GM10248 (cell line): ENCODE measurements at regions of chr7 and their contacts with region 1.

Region 1: DNA sequence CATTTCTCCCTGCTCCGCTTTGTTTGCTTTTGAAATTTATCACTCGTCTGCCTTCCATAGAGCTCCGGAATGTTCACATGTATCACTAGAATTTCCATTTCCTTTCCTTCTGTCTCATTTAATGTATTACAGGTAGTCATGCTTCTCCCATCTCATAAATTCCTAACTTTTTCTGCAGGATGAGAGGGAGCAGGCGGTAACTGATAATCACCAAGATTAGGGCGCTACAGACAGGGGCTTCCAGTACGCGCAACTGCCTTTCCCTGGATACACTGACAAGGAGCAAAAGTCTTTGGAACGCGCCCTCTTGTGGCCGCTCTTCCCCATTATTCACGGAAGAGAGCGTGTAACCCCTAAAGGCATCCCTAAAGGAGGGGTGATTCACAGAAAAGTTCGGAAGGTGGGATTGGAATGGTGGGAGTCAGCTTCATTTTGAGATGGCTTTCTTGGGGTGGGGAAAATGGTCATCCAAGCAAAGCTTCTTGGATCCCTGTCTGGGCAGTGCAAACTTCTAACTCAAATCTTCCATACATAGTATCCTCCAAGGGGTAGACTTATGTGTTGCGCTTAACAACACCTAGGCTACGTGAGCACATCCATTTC is 6.5 kb downstream of the INHBA start:
- DNase-seq: peak; percentile 31
- CTCF ChIP-seq: peak; percentile 65

Region 2: GRCh38 chr7:41437257-41438196 is 258.9 kb before region 1 on chr7:
- CTCF ChIA-PET with region 1: no interaction called
- POLR2A ChIA-PET with region 1: no interaction called
- DNase-seq: no peak
- CTCF ChIP-seq: no peak

Region 3: DNA sequence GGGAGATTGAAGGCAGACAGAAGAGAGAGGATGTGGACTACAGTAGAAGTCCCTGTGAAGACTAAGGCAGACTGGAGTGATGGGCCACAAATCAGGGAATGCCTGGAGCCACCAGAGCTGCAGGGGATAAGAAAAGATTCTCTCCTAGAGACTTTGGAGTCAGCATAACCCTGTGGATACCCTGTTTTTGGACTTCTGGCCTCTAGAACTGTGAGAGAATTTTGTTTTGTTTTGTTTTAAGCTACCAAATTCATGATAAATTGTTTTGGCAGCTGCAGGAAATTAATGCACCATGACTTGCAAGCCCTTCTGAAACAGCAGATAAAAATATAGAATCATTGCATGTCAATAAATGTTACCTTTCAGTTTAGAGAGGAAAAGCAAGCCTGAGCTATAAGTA is 34.8 kb before region 1 on chr7:
- CTCF ChIA-PET with region 1: interaction called, 10 read pairs
- POLR2A ChIA-PET with region 1: no interaction called
- DNase-seq: no peak
- CTCF ChIP-seq: no peak

Region 4: GRCh38 chr7:41834805-41835694 is 138.6 kb after region 1 on chr7:
- CTCF ChIA-PET with region 1: no interaction called
- POLR2A ChIA-PET with region 1: no interaction called
- DNase-seq: no peak
- CTCF ChIP-seq: no peak

Region 5: DNA sequence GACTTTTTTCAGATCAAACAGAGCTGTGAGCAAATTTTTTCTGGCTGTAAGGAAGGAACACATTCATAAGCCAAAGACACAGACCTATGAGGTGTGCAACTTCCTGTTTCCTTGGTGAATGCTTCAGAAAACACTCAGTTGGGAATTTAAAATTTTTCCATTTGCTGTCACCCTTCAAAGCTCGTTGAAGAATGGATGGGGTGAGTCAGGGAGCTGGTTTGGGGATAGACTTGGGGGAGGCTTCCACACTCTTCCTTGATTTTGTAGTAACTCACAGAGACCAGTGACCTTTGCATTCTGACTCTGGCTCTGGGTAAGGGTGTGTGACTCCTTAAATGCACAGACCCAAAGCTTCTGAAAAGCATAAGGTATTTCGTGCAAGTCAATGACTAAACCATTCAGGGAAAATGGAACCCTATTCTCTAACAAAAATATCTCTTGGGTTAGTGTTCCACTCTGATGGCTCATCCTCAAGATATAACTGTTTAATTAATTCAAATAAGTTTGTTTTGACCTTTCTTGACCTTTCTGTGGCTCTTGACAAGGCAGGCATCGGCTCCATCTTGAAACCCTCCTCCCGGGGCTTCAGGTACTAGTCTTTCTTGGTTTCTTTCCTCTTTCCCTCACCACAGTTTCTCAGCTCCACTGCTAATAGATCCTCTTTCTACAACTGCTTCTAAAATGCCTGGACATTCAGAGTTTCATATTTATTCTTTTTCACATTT is 234.3 kb after region 1 on chr7:
- CTCF ChIA-PET with region 1: no interaction called
- POLR2A ChIA-PET with region 1: no interaction called
- DNase-seq: no peak
- CTCF ChIP-seq: no peak

Region 6: DNA sequence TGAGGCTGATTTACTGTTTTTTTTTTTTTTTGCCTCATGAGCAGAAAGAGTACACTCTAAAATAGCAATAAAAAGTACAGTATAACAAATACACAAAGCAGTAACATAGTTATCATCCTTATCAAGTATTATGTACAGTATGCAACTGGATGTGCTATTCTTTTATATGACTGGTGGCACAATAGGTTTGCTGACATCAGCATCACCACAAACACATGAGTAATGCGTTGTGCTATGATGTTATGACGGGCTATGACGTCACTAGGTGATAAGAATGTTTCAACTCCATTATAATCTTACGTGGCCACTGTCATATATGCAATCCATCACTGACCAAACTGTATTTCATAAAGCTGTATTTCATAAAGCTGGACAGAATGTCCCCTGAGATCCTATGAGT is 729.7 kb after region 1 on chr7:
- CTCF ChIA-PET with region 1: no interaction called
- POLR2A ChIA-PET with region 1: no interaction called
- DNase-seq: no peak
- CTCF ChIP-seq: no peak